HEK293 (cell line): ENCODE measurements at regions of chr2 and their contacts with region 1.

Region 1: DNA sequence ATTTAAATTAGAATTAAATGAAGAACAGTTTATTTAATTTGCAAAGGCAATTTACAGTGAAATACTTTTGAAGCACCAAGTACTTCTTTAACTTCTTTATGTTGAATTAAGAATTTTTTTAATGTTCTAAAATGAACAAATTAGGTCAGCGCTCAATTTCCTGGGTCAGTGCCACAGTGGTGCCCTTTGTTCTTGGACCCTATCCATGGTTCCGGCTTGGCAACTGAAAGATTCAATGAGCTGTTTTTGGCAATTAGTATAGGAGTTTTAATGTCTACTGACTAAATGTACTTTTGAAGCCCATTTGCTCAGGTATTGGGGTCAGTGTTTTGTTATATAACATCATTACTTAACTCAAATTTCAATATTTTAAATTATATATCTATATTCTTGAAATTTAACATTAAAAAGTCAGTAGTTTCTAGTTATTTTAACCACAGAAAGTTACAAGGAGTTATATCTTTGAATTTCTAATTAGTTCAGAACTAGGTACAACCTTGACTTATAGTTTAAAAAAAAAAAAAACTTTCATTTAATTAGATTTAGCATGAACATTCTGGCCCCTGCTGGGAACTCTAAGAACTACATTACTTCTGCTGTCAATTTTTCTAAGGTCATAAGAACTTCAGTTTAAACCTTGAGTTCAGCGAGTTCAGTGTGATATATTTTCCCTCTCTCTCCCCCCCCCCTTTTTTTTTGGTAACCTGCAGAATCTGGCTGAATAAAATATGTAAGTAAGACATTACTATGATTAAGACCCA is 7.6 kb upstream of the MSTN start:
- H3K4me3 ChIP-seq: no peak overlapping the region
- H3K27ac ChIP-seq: no peak overlapping the region
- H3K4me1 ChIP-seq: no peaks in the 10 kb centered on the region
- CTCF ChIP-seq: peak; percentile 59; the same call in 1 of the 2 replicates

Region 2: DNA sequence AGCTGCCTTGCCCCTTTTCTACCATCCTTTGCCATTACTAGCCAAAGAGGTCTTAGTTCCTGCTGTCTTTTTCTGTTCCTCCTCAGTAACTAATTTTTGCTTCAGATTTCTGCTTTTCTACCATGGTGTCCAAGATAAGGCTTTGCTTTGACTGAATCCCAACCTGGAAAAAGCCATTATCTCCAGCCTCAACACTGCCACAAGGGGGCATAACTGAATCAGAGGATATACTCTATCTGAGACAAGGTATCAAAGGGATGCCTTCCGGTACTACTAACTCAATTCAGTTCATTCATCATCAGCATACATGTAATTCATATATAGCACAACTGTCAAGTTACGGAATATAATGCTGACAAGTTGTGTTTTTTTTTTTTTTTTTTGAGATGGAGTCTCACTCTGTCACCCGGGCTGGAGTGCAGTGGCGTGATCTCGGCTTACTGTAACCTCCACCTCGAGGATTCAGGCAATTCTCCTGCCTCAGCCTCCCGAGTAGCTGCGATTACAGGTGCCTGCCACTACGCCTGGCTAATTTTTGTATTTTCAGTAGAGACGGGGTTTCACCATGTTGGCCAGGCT is 318.9 kb before region 1 on chr2:
- CTCF ChIA-PET with region 1: interaction called, 11 read pairs
- POLR2A ChIA-PET with region 1: no interaction called
- H3K4me3 ChIP-seq: no peak overlapping the region
- H3K27ac ChIP-seq: no peak overlapping the region
- H3K4me1 ChIP-seq: no peaks in the 10 kb centered on the region
- CTCF ChIP-seq: peak; percentile 75; the same call in 1 of the 2 replicates

Region 3: DNA sequence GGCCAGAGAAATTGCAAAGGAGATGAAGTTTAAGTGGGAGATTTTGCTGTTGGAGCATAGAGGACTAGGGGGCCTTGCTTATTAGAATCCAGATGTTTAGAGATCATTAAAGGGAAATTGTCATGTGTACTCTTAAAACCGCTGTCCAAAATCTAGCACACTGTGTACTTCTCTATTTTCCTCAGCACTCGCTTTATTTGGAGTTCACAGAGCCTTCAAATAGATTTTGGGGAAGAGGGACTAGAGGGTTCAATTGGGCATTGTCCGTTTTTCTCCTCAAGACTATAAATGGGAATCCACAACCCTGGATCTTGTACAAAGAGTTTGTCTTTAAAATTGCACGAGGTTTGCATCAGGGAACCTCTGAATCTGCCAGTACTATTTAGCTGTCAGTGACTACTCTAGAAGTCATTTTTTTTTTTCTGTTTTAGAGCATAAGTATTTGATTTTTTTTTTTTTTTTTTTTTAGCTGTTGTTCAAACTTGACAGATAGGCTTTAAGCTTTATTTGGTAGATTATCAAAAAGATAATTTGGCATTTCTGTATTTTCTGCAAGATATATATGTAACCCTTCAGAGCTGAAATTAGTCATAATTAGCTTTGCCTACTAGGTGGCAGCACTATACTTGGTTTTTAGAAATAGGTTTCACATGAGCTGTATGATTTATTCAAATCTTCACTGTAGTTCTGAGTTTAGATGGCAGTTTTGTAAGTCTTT is 271.6 kb before region 1 on chr2:
- CTCF ChIA-PET with region 1: interaction called, 14 read pairs
- POLR2A ChIA-PET with region 1: no interaction called
- H3K4me3 ChIP-seq: no peak overlapping the region
- H3K27ac ChIP-seq: no peak overlapping the region
- H3K4me1 ChIP-seq: peaks cover 9% of the 10 kb centered on the region; the same call in 1 of the 2 replicates
- CTCF ChIP-seq: no peak; the same call in 1 of the 2 replicates

Region 4: DNA sequence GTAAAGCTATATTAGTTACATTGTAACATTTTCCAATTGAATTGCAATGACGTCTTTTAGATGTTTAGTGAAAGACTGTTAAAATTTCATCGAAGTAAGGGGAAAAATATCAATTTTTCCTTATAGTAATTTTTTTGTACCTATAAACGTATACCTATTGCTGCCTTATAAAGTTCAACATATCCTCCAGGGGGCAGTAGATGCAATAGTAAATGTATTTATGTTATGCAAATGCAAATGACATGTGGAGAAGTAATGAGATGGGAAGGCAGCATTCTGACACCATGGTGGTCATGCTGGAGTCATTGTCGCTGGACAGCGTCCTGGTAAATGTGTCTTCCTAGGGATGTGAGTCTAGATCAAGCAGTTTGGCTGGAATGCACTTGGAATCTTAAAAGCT is 46.3 kb before region 1 on chr2:
- CTCF ChIA-PET with region 1: interaction called, 10 read pairs
- POLR2A ChIA-PET with region 1: no interaction called
- H3K4me3 ChIP-seq: no peak overlapping the region
- H3K27ac ChIP-seq: no peak overlapping the region
- H3K4me1 ChIP-seq: no peaks in the 10 kb centered on the region
- CTCF ChIP-seq: no peak